A549 (cell line): ENCODE measurements at regions of chr1 and their contacts with region 1.

Region 1: GRCh38 chr1:22704440-22705067 is 6.1 kb upstream of the EPHB2 start:
- DNase-seq: peak; percentile 75 to 88
- ATAC-seq: peak; percentile 77 to 98
- H3K4me3 ChIP-seq: no peak overlapping the region
- H3K27ac ChIP-seq: peak overlapping the region in 1 of 2 experiments; percentile 63; a peak in 2 of 6 replicates
- H3K4me1 ChIP-seq: 0 out of 3 replicates have a peak, but pooled peaks cover 1% of the 10 kb centered on the region
- CTCF ChIP-seq: peak; percentile 73
- EP300 ChIP-seq: no peak
- POLR2A ChIP-seq: no peak
- RAD21 ChIP-seq: peak; percentile 77 to 86

Region 2: GRCh38 chr1:22731924-22732720 is 27.6 kb after region 1 on chr1:
- CTCF ChIA-PET with region 1: interaction called, 37 read pairs
- POLR2A ChIA-PET with region 1: no interaction called
- DNase-seq: peak in 1 of 2 experiments; percentile 43
- ATAC-seq: peak in 1 of 2 experiments; percentile 60; a peak in 4 of 6 replicates
- H3K4me3 ChIP-seq: no peak overlapping the region
- H3K27ac ChIP-seq: peak overlapping the region in 1 of 2 experiments; percentile 61; a peak in 3 of 6 replicates
- H3K4me1 ChIP-seq: peaks cover 32% of the 10 kb centered on the region
- CTCF ChIP-seq: peak; percentile 32; the same call in 2 of the 3 replicates
- EP300 ChIP-seq: no peak
- POLR2A ChIP-seq: no peak
- RAD21 ChIP-seq: peak; percentile 25 to 47; a peak in 1 of 5 replicates

Region 3: DNA sequence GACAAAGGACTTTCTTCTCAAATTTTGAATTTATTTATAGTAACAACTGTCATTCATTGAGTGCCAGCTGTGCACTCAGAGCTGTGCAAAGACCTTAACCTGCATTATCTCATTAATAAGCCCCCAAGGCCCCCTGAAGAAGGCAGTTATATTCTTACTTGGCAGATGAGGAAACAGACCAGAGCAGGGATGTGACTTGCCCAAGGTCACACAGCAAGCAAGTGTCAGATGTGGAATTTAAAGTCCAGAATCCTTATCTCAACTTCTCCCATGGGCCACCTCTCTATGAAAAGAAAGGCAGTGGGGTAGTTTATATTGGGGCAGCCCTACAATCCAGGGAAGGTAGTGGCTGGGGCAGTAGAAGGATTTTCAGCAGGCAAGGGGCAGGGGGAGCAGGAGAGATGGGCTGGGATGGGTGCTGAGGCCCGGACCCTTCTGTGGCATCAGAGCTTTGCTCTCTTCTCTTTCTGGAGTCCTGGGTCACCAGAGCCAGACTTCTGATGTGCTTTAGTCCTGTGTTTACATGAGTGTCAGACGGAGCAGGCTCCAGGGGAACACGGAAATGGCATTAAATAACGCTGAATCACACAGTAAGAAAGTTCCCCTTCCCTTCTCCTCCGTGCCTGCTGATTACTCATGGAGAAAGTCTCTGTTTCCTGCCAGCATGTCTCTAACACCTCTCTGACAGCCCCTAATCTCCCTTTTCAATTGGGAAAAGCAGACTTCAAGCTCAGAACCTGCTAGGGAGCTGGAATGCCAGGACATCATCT is 45.5 kb after region 1 on chr1:
- CTCF ChIA-PET with region 1: interaction called, 46 read pairs
- POLR2A ChIA-PET with region 1: interaction called, 4 read pairs
- DNase-seq: peak; percentile 65 to 88
- ATAC-seq: peak; percentile 60 to 83
- H3K4me3 ChIP-seq: no peak overlapping the region
- H3K27ac ChIP-seq: peak overlapping the region; percentile 95 to 97
- H3K4me1 ChIP-seq: peaks cover 79% of the 10 kb centered on the region
- CTCF ChIP-seq: no peak
- EP300 ChIP-seq: peak; percentile 61 to 78; a peak in 3 of 5 replicates
- POLR2A ChIP-seq: no peak
- RAD21 ChIP-seq: 0 out of 5 replicates have a peak, but pooled peaks of 1 of the 2 experiments have one; percentile 24

Region 4: GRCh38 chr1:22773981-22774832 is 69.7 kb after region 1 on chr1:
- CTCF ChIA-PET with region 1: interaction called, 17 read pairs
- POLR2A ChIA-PET with region 1: no interaction called
- DNase-seq: no peak
- ATAC-seq: no peak
- H3K4me3 ChIP-seq: no peak overlapping the region
- H3K27ac ChIP-seq: 0 out of 6 replicates have a peak overlapping the region, but pooled peaks of 1 of the 2 experiments have one; percentile 21
- H3K4me1 ChIP-seq: 0 out of 3 replicates have a peak, but pooled peaks cover 3% of the 10 kb centered on the region
- CTCF ChIP-seq: no peak
- EP300 ChIP-seq: no peak
- POLR2A ChIP-seq: no peak
- RAD21 ChIP-seq: no peak

Region 5: GRCh38 chr1:22861764-22862440 is 157.3 kb after region 1 on chr1:
- CTCF ChIA-PET with region 1: interaction called, 29 read pairs
- POLR2A ChIA-PET with region 1: interaction called, 6 read pairs
- DNase-seq: peak; percentile 30 to 46
- ATAC-seq: peak; percentile 71 to 88; a peak in 5 of 6 replicates
- H3K4me3 ChIP-seq: no peak overlapping the region
- H3K27ac ChIP-seq: peak overlapping the region in 1 of 2 experiments; percentile 59; a peak in 3 of 6 replicates
- H3K4me1 ChIP-seq: peaks cover 9% of the 10 kb centered on the region; the same call in 2 of the 3 replicates
- CTCF ChIP-seq: peak; percentile 49
- EP300 ChIP-seq: no peak
- POLR2A ChIP-seq: no peak
- RAD21 ChIP-seq: peak; percentile 60 to 69

Region 6: DNA sequence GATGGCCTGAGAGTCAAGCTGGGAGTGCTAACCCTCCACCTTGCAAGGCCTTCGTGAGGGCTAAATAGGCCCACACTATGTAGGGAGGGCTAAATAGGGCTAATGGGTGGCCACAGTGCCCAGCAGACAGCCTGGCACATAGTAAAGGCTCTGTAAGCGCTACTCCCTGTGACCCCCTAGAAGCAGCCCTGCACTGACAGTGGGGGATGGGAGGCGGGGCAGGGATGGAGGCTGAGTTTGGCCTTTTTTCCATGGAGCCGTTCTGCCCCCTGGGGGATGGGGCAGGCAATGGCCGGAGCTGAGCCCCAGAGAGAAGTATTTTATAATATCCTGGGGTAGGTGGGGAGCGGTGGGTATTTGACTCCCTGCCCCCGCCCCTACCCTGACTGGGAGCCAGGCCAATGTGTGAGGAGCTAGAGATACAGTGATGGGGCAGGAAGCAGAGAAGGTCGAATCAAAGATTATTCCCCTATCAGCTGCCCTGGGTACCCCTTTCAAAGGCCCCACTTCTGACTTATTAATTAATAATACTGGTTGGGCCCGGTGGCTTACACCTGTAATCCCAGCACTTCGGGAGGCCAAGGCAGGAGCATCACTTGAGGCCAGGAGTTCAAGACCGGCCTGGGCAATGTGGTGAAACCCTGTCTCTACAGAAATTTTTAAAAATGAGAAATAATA is 225.8 kb after region 1 on chr1:
- CTCF ChIA-PET with region 1: interaction called, 16 read pairs
- POLR2A ChIA-PET with region 1: no interaction called
- DNase-seq: peak; percentile 34 to 82
- ATAC-seq: peak; percentile 80 to 91; a peak in 5 of 6 replicates
- H3K4me3 ChIP-seq: no peak overlapping the region
- H3K27ac ChIP-seq: no peak overlapping the region
- H3K4me1 ChIP-seq: no peaks in the 10 kb centered on the region
- CTCF ChIP-seq: peak; percentile 64
- EP300 ChIP-seq: no peak
- POLR2A ChIP-seq: no peak
- RAD21 ChIP-seq: peak; percentile 88 to 90

Region 7: GRCh38 chr1:23062271-23062670 is 357.7 kb after region 1 on chr1:
- CTCF ChIA-PET with region 1: no interaction called
- POLR2A ChIA-PET with region 1: no interaction called
- DNase-seq: no peak
- ATAC-seq: no peak
- H3K4me3 ChIP-seq: no peak overlapping the region
- H3K27ac ChIP-seq: no peak overlapping the region
- H3K4me1 ChIP-seq: no peaks in the 10 kb centered on the region
- CTCF ChIP-seq: no peak
- EP300 ChIP-seq: no peak
- POLR2A ChIP-seq: no peak
- RAD21 ChIP-seq: no peak